Activated CD4-positive, alpha-beta T cell treated with anti-CD3 and anti-CD28 coated beads, Interleukin-2, amount 10 ng/mL, durations not matched to agents 24 days and 14 days (primary cell): ENCODE measurements at regions of chr14 and their contacts with region 1.

Region 1: DNA sequence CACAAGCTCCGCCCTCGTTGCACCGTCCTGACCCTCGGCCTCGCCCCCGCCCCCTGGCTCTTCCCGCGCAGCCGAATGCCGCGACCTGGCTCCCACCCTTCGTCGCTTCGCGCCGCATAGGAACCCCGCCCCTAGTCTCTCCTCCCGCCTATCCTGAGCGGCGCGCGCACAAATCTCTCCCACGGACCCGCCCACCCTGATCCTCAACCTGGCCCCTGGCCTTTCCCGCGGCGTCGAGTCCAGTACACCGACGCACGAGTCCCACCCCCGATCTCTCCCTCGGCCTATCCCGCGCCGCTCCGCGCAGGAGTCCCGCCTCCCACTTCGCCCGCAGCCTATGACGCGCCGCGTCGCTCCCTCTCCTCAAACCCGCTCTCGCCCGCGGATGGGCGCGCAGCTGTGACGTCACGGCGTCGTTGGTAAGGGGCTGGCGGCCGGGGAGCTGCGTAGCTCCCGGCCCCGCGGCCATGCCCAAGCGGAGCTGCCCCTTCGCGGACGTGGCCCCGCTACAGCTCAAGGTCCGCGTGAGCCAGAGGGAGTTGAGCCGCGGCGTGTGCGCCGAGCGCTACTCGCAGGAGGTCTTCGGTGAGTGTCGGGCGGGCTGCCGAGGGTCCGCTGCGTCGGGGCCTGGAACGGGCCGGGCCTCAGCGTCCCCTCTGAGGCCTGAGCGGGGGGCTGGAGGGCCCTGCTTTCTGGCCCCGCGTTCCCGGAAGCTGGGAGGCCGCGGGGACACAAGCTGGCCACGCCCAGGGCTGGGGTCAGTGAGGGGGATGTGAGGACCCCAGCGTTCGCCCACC is at the start of gene SIVA1:
- DNase-seq: peak; percentile 100
- H3K4me3 Mint-ChIP-seq: peak within 1 kb of the TSS; percentile 93
- H3K27ac Mint-ChIP-seq: peak within 1 kb of the TSS; percentile 94
- H3K4me1 Mint-ChIP-seq: peaks cover 35% of the 10 kb centered on the region
- H3K27me3 Mint-ChIP-seq: peaks cover 1% of the 10 kb centered on the region
- total RNA-seq, gene SIVA1: 117 and 123 TPM in 2 replicates

Region 2: GRCh38 chr14:104723648-104724406 is 29.1 kb before region 1 on chr14 and contains the start of gene ADSS1:
- intact Hi-C with region 1: loop called (anchors 2 kb)
- DNase-seq: peak; percentile 91
- H3K4me3 Mint-ChIP-seq: peak within 1 kb of the TSS; percentile 72
- H3K27ac Mint-ChIP-seq: no peak within 1 kb of the TSS
- H3K4me1 Mint-ChIP-seq: peaks cover 2% of the 10 kb centered on the region
- H3K27me3 Mint-ChIP-seq: peaks cover 2% of the 10 kb centered on the region
- total RNA-seq, gene ADSS1: 0.96 and 1.4 TPM in 2 replicates

Region 3: GRCh38 chr14:104768437-104769323 is 15.7 kb after region 1 on chr14:
- intact Hi-C with region 1: loop called (anchors 1 kb)
- DNase-seq: peak; percentile 98
- H3K4me3 Mint-ChIP-seq: no peak overlapping the region
- H3K27ac Mint-ChIP-seq: no peak overlapping the region
- H3K4me1 Mint-ChIP-seq: peaks cover 3% of the 10 kb centered on the region
- H3K27me3 Mint-ChIP-seq: no peaks in the 10 kb centered on the region

Region 4: DNA sequence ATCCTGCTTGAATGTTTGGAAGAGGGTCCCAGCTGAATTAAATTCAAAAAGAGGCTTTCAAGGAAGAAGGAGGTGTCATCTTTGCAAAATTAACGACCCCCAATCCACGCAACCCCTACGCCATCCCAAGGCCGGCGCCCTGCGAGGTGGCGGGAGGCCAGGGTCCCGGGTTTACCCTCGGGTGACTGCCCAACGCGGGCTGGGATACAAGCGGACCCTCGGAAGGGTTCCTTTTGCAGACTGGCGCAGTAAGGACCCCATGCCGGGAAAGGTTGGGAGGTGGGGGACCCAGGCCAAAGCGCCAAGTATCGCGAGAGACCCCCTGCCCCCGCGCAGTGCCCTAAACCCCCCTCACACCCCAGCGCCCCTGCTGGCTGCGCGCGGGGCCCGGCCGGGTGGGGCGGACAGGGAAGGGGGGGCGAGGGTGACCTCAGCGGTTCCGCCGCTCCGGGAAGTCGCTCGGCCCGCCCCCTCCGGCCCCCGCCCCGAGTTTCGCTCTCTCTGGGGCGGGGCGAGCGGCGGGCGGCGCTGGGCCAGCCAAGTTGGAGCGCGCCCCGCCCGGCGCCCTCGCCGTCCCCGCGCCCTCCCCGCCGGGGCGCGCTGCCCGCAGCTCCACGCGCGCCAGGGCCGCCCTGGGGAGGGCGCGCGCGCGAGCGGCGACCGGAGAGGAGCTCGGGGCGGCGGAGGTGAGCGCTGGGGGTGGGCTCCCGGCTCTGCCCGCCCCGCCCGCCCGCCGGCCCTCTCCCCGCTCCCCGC is 47.3 kb after region 1 on chr14:
- intact Hi-C with region 1: loop called (anchors 1 kb)
- DNase-seq: peak; percentile 95
- H3K4me3 Mint-ChIP-seq: peak overlapping the region; percentile 21
- H3K27ac Mint-ChIP-seq: peak overlapping the region; percentile 78
- H3K4me1 Mint-ChIP-seq: peaks cover 20% of the 10 kb centered on the region
- H3K27me3 Mint-ChIP-seq: peaks cover 1% of the 10 kb centered on the region

Region 5: GRCh38 chr14:105398044-105398725 is 645.3 kb after region 1 on chr14 and contains the start of gene TEX22:
- intact Hi-C with region 1: loop called (anchors 5 kb)
- DNase-seq: peak; percentile 97
- H3K4me3 Mint-ChIP-seq: peak within 1 kb of the TSS; percentile 93
- H3K27ac Mint-ChIP-seq: peak within 1 kb of the TSS; percentile 96
- H3K4me1 Mint-ChIP-seq: peaks cover 20% of the 10 kb centered on the region
- H3K27me3 Mint-ChIP-seq: no peaks in the 10 kb centered on the region
- total RNA-seq, gene TEX22: 5.7 and 6.4 TPM in 2 replicates